Sciatic nerve (tissue), 2 donors: ENCODE measurements at regions of chr13 and their contacts with region 1.

Region 1: GRCh38 chr13:75365724-75366173 is 116.2 kb downstream of the TBC1D4 start:
- DNase-seq: no peak
- ATAC-seq: no peak

Region 2: GRCh38 chr13:74891610-74892009 is 474.1 kb before region 1 on chr13:
- intact Hi-C with region 1: no loop called
- DNase-seq: no peak
- ATAC-seq: peak; percentile 66

Region 3: DNA sequence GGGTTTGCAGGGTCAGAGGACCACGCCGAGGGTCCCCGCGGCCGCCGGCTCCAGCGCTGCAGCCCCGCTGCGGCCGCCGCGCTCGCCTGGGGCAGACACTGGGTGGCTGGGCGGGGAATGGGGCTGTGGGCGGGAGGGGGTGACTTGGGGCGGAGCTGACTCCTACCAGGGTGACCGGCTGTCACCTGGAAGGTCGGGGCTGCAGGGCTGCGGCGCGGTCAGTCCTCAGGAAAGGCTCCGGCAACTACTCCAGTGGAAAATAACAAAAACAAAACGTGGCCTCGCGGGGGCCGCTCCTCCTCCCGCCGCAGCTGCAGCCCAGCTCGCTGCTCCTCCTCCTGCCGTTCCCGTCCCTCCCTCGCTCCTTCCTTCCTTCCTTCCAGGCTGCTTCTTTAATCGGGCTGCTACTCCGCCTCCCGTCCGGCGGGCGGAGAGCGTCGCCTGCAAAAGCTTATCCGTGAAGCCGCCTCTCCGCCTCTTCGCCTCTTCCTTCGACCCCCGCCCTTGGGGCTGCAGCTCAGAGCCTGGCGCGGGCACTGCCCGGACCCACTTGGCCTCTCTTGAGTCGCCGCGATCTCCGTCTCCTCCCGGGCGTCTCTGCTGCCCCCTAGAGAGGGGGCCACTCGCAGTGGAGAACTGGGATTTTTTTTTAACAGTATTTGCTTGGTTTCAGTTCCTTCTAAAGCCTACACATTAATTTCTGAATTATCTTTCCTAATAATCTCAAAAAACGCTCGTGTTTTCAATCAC is 116.5 kb after region 1 on chr13 and contains the start of gene TBC1D4:
- intact Hi-C with region 1: loop called (anchors 5 kb)
- DNase-seq: peak; percentile 88
- ATAC-seq: peak; percentile 93
- total RNA-seq, gene TBC1D4: 19.6 TPM

Region 4: GRCh38 chr13:76086729-76087128 is 721.0 kb after region 1 on chr13:
- intact Hi-C with region 1: no loop called
- DNase-seq: no peak
- ATAC-seq: no peak